Caco-2 (cell line): ENCODE measurements at regions of chr2 and their contacts with region 1.

Region 1: GRCh38 chr2:102615622-102616436 is 3.5 kb upstream of the SLC9A2 start:
- DNase-seq: peak; percentile 70 to 73
- H3K4me3 ChIP-seq: no peak overlapping the region
- H3K4me3 Mint-ChIP-seq: no peak overlapping the region
- H3K27ac Mint-ChIP-seq: no peak overlapping the region
- H3K4me1 ChIP-seq: peaks cover 15% of the 10 kb centered on the region; the same call in 1 of the 2 replicates
- H3K4me1 Mint-ChIP-seq: peaks cover 6% of the 10 kb centered on the region
- H3K27me3 ChIP-seq: no peaks in the 10 kb centered on the region
- H3K27me3 Mint-ChIP-seq: no peaks in the 10 kb centered on the region
- CTCF ChIP-seq: peak; percentile 95 to 96

Region 2: GRCh38 chr2:102449370-102449974 is 166.4 kb before region 1 on chr2:
- CTCF ChIA-PET with region 1: interaction called, 6 read pairs
- POLR2A ChIA-PET with region 1: no interaction called
- intact Hi-C with region 1: loop called (anchors 1 kb)
- DNase-seq: peak; percentile 40 to 54
- H3K4me3 ChIP-seq: no peak overlapping the region
- H3K4me3 Mint-ChIP-seq: no peak overlapping the region
- H3K27ac Mint-ChIP-seq: no peak overlapping the region
- H3K4me1 ChIP-seq: no peaks in the 10 kb centered on the region
- H3K4me1 Mint-ChIP-seq: no peaks in the 10 kb centered on the region
- H3K27me3 ChIP-seq: no peaks in the 10 kb centered on the region; the same call in 1 of the 2 replicates
- H3K27me3 Mint-ChIP-seq: no peaks in the 10 kb centered on the region
- CTCF ChIP-seq: peak; percentile 72 to 74

Region 3: GRCh38 chr2:102473020-102473419 is 142.8 kb before region 1 on chr2 and contains the start of gene SLC9A4:
- CTCF ChIA-PET with region 1: interaction called, 28 read pairs
- POLR2A ChIA-PET with region 1: no interaction called
- intact Hi-C with region 1: loop called (anchors 1 kb)
- DNase-seq: peak; percentile 63 to 72
- H3K4me3 ChIP-seq: no peak within 1 kb of the TSS
- H3K4me3 Mint-ChIP-seq: no peak within 1 kb of the TSS
- H3K27ac Mint-ChIP-seq: no peak within 1 kb of the TSS
- H3K4me1 ChIP-seq: peaks cover 17% of the 10 kb centered on the region
- H3K4me1 Mint-ChIP-seq: no peaks in the 10 kb centered on the region
- H3K27me3 ChIP-seq: no peaks in the 10 kb centered on the region
- H3K27me3 Mint-ChIP-seq: no peaks in the 10 kb centered on the region
- CTCF ChIP-seq: peak; percentile 89 to 91
- total RNA-seq, gene SLC9A4: 1.2 and 1.4 TPM in 2 replicates

Region 4: DNA sequence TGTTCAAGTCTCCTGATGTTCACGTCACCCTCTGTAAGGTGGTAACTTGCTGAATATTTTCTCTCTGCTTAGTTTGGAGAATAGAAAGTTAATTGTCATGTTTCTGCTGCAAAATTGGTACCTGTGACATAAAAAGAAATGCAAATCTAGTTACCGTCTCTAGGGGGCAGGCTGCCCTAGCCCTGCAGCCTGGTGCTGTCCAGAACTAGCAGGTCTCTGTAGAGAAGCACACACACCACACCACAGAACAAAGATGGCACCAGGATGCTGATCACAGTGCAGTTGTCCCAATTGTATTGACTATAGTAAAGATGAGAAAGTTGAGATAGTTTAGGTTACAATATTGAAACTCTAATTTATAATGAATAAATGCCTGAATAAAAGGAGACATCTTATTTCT is 95.8 kb before region 1 on chr2:
- CTCF ChIA-PET with region 1: no interaction called
- POLR2A ChIA-PET with region 1: no interaction called
- intact Hi-C with region 1: loop called (anchors 1 kb)
- DNase-seq: peak; percentile 34 to 46
- H3K4me3 ChIP-seq: no peak overlapping the region
- H3K4me3 Mint-ChIP-seq: no peak overlapping the region
- H3K27ac Mint-ChIP-seq: no peak overlapping the region
- H3K4me1 ChIP-seq: peaks cover 57% of the 10 kb centered on the region
- H3K4me1 Mint-ChIP-seq: peaks cover 31% of the 10 kb centered on the region
- H3K27me3 ChIP-seq: no peaks in the 10 kb centered on the region
- H3K27me3 Mint-ChIP-seq: no peaks in the 10 kb centered on the region
- CTCF ChIP-seq: peak; percentile 54 to 55

Region 5: GRCh38 chr2:102664471-102664909 is 48.7 kb after region 1 on chr2:
- CTCF ChIA-PET with region 1: no interaction called
- POLR2A ChIA-PET with region 1: no interaction called
- intact Hi-C with region 1: loop called (anchors 5 kb)
- DNase-seq: peak; percentile 58 to 82
- H3K4me3 ChIP-seq: no peak overlapping the region
- H3K4me3 Mint-ChIP-seq: no peak overlapping the region
- H3K27ac Mint-ChIP-seq: no peak overlapping the region
- H3K4me1 ChIP-seq: peaks cover 48% of the 10 kb centered on the region
- H3K4me1 Mint-ChIP-seq: peaks cover 29% of the 10 kb centered on the region
- H3K27me3 ChIP-seq: no peaks in the 10 kb centered on the region
- H3K27me3 Mint-ChIP-seq: no peaks in the 10 kb centered on the region
- CTCF ChIP-seq: no peak

Region 6: DNA sequence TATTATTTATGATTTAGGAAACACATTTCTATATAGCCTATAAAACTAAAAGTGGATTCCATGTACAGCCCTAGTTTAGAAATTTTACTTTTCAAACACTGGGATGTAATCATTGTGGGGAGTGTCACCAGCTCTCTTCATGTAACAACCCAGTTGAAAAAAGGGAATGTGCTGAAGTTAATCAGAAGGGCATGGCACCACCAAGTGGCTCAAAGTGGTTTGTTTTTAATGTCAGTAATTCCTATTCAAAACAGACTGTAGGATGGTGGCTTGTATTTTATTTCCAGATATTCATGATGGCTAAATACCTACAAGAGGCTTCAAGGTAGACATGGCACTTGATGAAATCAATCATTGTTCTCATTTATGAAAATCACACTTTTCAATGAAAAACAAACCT is 87.9 kb after region 1 on chr2:
- CTCF ChIA-PET with region 1: interaction called, 13 read pairs
- POLR2A ChIA-PET with region 1: no interaction called
- intact Hi-C with region 1: loop called (anchors 1 kb)
- DNase-seq: peak in 1 of 2 experiments; percentile 39
- H3K4me3 ChIP-seq: no peak overlapping the region
- H3K4me3 Mint-ChIP-seq: no peak overlapping the region
- H3K27ac Mint-ChIP-seq: no peak overlapping the region
- H3K4me1 ChIP-seq: no peaks in the 10 kb centered on the region; the same call in 1 of the 2 replicates
- H3K4me1 Mint-ChIP-seq: peaks cover 17% of the 10 kb centered on the region
- H3K27me3 ChIP-seq: no peaks in the 10 kb centered on the region
- H3K27me3 Mint-ChIP-seq: no peaks in the 10 kb centered on the region
- CTCF ChIP-seq: peak in 1 of 2 experiments; percentile 60

Region 7: GRCh38 chr2:102736410-102737409 is 120.9 kb after region 1 on chr2:
- CTCF ChIA-PET with region 1: no interaction called
- POLR2A ChIA-PET with region 1: no interaction called
- intact Hi-C with region 1: no loop called
- DNase-seq: peak; percentile 81 to 91
- H3K4me3 ChIP-seq: peak overlapping the region; percentile 72
- H3K4me3 Mint-ChIP-seq: peak overlapping the region; percentile 94
- H3K27ac Mint-ChIP-seq: peak overlapping the region; percentile 93
- H3K4me1 ChIP-seq: no peaks in the 10 kb centered on the region
- H3K4me1 Mint-ChIP-seq: no peaks in the 10 kb centered on the region
- H3K27me3 ChIP-seq: no peaks in the 10 kb centered on the region
- H3K27me3 Mint-ChIP-seq: no peaks in the 10 kb centered on the region
- CTCF ChIP-seq: no peak

Region 8: DNA sequence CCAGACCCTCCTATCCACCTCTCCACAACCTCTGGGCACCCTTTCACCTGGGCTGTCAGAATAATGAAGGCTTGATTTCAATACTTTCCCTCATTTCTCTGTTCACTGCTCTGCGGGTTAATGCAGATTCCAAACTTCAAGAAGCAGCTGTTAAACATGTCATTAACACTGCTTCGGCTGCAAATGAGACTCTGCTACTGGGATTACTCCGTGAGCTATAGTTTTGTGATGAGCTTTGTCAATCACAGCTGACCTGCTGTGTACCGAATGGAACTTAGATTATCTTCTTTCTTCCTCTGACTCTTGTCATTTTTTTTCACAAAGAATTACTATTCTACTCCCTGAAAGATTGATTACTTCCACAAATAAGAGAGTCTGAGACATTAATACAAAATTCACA is 306.5 kb after region 1 on chr2:
- CTCF ChIA-PET with region 1: no interaction called
- POLR2A ChIA-PET with region 1: no interaction called
- intact Hi-C with region 1: no loop called
- DNase-seq: no peak
- H3K4me3 ChIP-seq: no peak overlapping the region
- H3K4me3 Mint-ChIP-seq: no peak overlapping the region
- H3K27ac Mint-ChIP-seq: no peak overlapping the region
- H3K4me1 ChIP-seq: no peaks in the 10 kb centered on the region
- H3K4me1 Mint-ChIP-seq: no peaks in the 10 kb centered on the region
- H3K27me3 ChIP-seq: no peaks in the 10 kb centered on the region
- H3K27me3 Mint-ChIP-seq: peaks cover 13% of the 10 kb centered on the region
- CTCF ChIP-seq: no peak